ENCODE measurements at regions of chr5 and their contacts with region 1.

Region 1: DNA sequence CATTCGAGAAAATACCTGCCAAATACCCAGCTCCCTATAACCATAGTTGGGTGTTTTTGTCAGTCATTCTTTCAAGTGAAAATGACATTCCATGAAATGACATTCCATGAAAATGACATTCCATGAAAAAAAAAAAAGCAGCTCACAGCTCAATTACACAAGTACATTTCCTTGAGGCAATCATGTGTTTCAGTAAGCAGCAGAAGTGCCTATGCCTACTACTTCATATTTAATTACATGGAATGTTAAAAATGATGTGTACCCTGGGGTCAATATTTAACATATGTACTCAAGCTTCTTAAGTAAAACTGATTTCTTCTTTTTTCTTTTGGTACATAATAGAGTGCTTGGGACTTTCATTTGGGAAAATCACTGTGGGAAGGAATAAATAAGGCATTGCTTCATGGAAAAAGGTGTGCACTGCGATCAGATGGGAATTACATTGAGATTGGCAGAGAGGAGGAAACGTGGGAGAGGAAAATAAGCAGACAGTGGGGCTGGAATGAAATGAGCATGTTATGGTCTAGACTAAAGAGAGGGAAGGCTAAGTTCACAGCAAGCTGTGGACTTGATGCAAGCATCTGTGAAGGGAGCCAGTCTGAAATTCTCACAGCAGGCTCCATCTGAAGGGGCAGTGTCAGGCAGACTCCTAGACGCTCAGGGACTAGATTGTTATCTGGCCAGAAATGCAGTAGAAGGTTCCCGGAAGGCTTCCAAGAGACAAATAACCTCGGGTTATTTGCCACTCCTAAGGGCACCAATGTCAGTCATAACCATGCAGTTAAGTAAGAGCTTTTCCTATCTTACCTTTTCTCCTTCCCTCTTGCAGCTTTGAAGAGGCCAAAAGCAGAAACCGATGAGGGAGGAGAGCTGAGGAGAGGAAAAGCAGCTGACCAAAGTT is 15.2 kb upstream of the SPATA9 start:
- DNase-seq: peak in 2 of 4 experiments; percentile 63 to 72
- ATAC-seq: peak; percentile 87
- H3K4me3 ChIP-seq: no peak overlapping the region
- H3K27ac ChIP-seq: peak overlapping the region; percentile 41; the same call in 1 of the 3 replicates
- H3K4me1 ChIP-seq: peaks cover 3 to 20% of the 10 kb centered on the region in 2 experiments; a peak in 3 of 5 replicates
- H3K27me3 ChIP-seq: no peaks in the 10 kb centered on the region
- CTCF ChIP-seq: no peak
- EP300 ChIP-seq: peak; percentile 18; the same call in 1 of the 2 replicates
- POLR2A ChIP-seq: no peak
- RAD21 ChIP-seq: no peak

Region 2: GRCh38 chr5:95194856-95195255 is 503.2 kb before region 1 on chr5:
- CTCF ChIA-PET with region 1: no interaction called
- POLR2A ChIA-PET with region 1: no interaction called
- in situ Hi-C with region 1: no loop called
- intact Hi-C with region 1: no loop called
- DNase-seq: no peak
- ATAC-seq: no peak
- H3K4me3 ChIP-seq: no peak overlapping the region
- H3K27ac ChIP-seq: no peak overlapping the region
- H3K4me1 ChIP-seq: no peaks in the 10 kb centered on the region
- H3K27me3 ChIP-seq: no peaks in the 10 kb centered on the region
- CTCF ChIP-seq: no peak
- EP300 ChIP-seq: no peak
- POLR2A ChIP-seq: no peak
- RAD21 ChIP-seq: no peak

Region 3: DNA sequence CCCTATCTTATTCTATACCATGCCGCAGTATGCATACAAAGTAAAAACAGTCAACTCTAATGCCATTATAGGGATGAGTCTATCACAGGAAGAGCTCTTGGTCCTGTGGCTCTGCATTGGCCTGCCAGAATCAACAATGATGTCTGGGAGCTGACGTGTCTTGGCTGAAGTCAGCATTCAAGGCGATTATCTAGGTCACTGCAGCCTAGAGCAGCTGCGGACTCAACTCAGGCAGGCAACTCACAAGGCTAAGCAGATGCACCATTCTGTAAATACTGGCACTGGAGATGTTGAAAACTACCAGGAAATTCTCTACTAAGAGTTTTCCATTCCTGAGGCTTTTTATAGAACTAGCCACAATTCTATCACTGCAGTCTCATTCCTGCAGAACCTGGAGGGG is 28.5 kb before region 1 on chr5:
- CTCF ChIA-PET with region 1: no interaction called
- POLR2A ChIA-PET with region 1: interaction called, 11 read pairs
- in situ Hi-C with region 1: no loop called
- intact Hi-C with region 1: no loop called
- DNase-seq: peak in 2 of 4 experiments; percentile 41 to 75
- ATAC-seq: peak; percentile 70
- H3K4me3 ChIP-seq: no peak overlapping the region
- H3K27ac ChIP-seq: 0 out of 3 replicates have a peak overlapping the region, but pooled peaks have one; percentile 1
- H3K4me1 ChIP-seq: peaks cover 3 to 28% of the 10 kb centered on the region in 2 experiments; a peak in 4 of 5 replicates
- H3K27me3 ChIP-seq: no peaks in the 10 kb centered on the region
- CTCF ChIP-seq: no peak
- EP300 ChIP-seq: no peak
- POLR2A ChIP-seq: no peak
- RAD21 ChIP-seq: no peak